ENCODE measurements at regions of chr20 and their contacts with region 1.

Region 1: GRCh38 chr20:9359561-9360308 is 154.7 kb upstream of the LAMP5 start:
- DNase-seq: no peak
- H3K4me3 ChIP-seq: no peak overlapping the region
- H3K27ac ChIP-seq: peak overlapping the region; percentile 9
- H3K4me1 ChIP-seq: peaks cover 14% of the 10 kb centered on the region
- H3K27me3 ChIP-seq: no peaks in the 10 kb centered on the region
- CTCF ChIP-seq: peak; percentile 35 to 47 (median 37)
- POLR2A ChIP-seq: no peak

Region 2: GRCh38 chr20:8782804-8783203 is 576.9 kb before region 1 on chr20:
- intact Hi-C with region 1: loop called (anchors 10 kb)
- DNase-seq: no peak
- H3K4me3 ChIP-seq: no peak overlapping the region
- H3K27ac ChIP-seq: no peak overlapping the region
- H3K4me1 ChIP-seq: no peaks in the 10 kb centered on the region
- H3K27me3 ChIP-seq: no peaks in the 10 kb centered on the region
- CTCF ChIP-seq: no peak
- POLR2A ChIP-seq: no peak

Region 3: GRCh38 chr20:8842525-8842924 is 517.2 kb before region 1 on chr20:
- intact Hi-C with region 1: loop called (anchors 10 kb)
- DNase-seq: no peak
- H3K4me3 ChIP-seq: no peak overlapping the region
- H3K27ac ChIP-seq: no peak overlapping the region
- H3K4me1 ChIP-seq: no peaks in the 10 kb centered on the region
- H3K27me3 ChIP-seq: no peaks in the 10 kb centered on the region
- CTCF ChIP-seq: no peak
- POLR2A ChIP-seq: no peak

Region 4: DNA sequence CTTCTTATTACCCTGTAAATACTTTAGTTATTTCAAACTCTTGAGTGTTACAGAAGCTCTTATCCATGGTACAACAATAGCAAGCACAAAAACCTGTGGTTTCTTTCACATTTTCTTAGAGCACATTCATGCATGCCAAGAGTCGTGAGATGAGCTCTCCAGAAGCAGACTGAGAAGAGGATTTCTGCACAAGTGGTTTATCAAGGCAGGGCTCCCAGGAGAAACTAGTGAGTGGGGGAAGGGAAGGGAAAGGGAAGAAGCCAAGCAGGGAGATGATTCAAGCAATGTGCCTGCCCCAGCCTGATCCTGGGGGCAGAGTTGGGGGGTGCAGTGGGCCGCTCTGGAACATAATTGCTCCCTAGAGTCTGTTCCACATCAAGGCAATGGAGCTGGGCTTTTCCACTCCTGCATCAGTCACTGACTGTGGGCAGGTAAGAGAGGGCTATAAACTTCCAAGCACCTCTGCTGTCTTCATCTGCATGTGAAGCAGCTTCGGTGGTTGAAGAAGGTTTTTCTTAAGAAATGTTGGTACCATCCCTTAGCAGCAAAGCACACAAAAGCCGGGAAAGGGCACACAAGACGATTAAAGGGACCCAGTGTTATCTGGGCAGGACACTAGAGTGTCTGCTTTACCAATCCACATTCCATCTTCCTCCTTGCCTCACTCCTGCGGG is 138.7 kb before region 1 on chr20:
- intact Hi-C with region 1: no loop called
- DNase-seq: no peak
- H3K4me3 ChIP-seq: no peak overlapping the region
- H3K27ac ChIP-seq: no peak overlapping the region
- H3K4me1 ChIP-seq: no peaks in the 10 kb centered on the region
- H3K27me3 ChIP-seq: no peaks in the 10 kb centered on the region
- CTCF ChIP-seq: no peak
- POLR2A ChIP-seq: no peak

Region 5: GRCh38 chr20:9458138-9458796 is 98.5 kb after region 1 on chr20:
- intact Hi-C with region 1: no loop called
- DNase-seq: no peak
- H3K4me3 ChIP-seq: no peak overlapping the region
- H3K27ac ChIP-seq: no peak overlapping the region
- H3K4me1 ChIP-seq: no peaks in the 10 kb centered on the region
- H3K27me3 ChIP-seq: no peaks in the 10 kb centered on the region
- CTCF ChIP-seq: no peak
- POLR2A ChIP-seq: no peak

Measured in vagina (tissue), 2 donors.